ENCODE measurements at regions of chr6 and their contacts with region 1.

Region 1: DNA sequence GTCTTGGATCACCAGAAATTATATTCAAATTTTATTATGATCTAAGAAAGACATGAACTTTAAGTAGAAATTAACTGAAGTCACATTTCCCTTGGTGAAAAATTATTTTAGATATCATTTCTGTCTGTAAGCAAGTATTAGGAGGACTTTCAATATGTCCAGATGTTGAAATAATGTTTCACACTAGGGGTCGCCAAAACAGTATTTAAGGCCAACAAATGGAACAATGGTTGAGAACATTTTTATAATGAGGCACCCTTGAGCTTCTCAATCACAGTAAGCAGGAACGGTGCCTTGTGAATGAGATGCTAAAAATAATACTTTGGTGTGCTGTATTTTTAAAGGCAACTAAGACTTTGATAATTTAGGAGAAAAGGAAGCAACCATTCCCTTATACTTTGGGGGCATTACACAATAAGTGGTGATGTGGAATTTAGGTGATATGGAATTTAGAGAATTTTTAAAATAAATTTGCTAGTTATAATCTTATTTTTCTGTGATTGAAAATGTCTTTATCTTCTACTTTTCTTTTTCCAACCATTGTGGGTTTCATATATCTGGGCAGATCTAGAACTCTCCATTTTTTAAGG is 9.6 kb upstream of the SF3B5 start:
- DNase-seq: no peak
- H3K4me3 ChIP-seq: no peak overlapping the region
- H3K27ac ChIP-seq: no peak overlapping the region
- H3K4me1 ChIP-seq: no peaks in the 10 kb centered on the region
- H3K27me3 ChIP-seq: no peaks in the 10 kb centered on the region
- CTCF ChIP-seq: peak; percentile 76

Region 2: GRCh38 chr6:144158133-144158532 is 53.1 kb after region 1 on chr6:
- intact Hi-C with region 1: loop called (anchors 2 kb)
- DNase-seq: peak; percentile 47
- H3K4me3 ChIP-seq: peak overlapping the region; percentile 20
- H3K27ac ChIP-seq: peak overlapping the region; percentile 74
- H3K4me1 ChIP-seq: peaks cover 52% of the 10 kb centered on the region
- H3K27me3 ChIP-seq: no peaks in the 10 kb centered on the region
- CTCF ChIP-seq: no peak

Region 3: DNA sequence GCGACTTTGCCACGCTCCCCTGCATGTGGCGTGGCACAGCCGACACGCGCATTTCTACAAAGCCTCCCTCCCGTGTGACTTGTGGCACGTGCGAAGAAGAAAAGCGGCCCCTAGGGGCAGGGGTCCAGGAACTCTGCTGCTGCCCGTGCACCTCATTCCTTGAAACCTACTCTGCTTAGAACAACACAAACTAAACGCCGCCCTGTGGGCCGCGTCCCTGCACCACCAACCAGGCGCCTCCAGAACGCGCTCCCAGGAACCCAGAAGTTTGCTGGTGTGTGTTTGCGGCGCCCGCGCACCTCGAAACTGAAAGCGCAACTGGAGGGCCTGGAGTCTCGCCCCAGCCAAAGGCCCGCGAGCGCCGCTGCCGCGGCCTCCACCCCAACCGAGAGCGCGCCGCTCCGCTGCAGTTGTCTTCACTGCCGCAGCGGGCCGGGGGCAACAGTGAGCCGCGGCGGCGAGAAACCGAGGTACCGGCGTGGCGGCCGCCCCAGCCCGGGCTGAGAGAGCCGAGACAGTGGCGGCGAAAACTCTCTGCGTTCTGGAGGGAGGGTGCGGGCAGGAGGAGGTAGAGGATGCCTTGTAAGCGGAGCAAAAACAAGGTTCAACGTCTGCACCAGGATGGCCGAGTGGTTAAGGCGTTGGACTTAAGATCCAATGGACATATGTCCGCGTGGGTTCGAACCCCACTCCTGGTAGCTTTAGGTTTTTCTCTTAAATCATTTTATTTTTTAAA is 111.1 kb after region 1 on chr6:
- intact Hi-C with region 1: loop called (anchors 2 kb)
- DNase-seq: peak; percentile 93
- H3K4me3 ChIP-seq: peak overlapping the region; percentile 79
- H3K27ac ChIP-seq: peak overlapping the region; percentile 93
- H3K4me1 ChIP-seq: peaks cover 31% of the 10 kb centered on the region
- H3K27me3 ChIP-seq: no peaks in the 10 kb centered on the region
- CTCF ChIP-seq: peak; percentile 67

Region 4: DNA sequence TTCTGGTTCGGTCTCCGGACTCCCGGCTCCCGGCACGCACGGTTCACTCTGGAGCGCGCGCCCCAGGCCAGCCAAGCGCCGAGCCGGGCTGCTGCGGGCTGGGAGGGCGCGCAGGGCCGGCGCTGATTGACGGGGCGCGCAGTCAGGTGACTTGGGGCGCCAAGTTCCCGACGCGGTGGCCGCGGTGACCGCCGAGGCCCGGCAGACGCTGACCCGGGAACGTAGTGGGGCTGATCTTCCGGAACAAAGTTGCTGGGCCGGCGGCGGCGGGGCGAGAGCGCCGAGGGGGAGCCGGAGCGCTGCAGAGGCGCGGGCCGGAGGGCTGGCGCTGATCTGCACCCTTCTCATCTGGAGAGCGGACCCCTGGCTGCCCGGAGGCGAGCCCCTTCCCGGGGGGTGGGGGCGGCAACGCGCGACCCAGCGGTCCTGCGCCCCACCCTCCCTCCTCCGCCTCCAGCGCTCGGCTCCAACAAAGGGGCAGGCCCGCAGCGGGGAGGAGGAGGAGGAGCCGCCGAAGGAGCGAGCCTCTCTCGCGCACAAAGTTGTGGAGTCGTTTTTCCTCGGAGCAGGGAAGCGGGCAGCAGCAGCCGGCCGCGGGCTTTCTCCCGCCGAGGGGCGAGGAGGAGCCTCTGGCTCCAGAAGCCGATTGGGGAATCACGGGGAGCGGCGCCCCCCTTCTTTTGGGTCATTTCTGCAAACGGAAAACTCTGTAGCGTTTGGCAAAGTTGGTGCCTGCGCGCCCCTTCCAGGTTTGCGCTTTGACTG is 180.0 kb after region 1 on chr6 and contains the start of gene UTRN:
- intact Hi-C with region 1: loop called (anchors 10 kb)
- DNase-seq: peak; percentile 85
- H3K4me3 ChIP-seq: peak within 1 kb of the TSS; percentile 96
- H3K27ac ChIP-seq: peak within 1 kb of the TSS; percentile 98
- H3K4me1 ChIP-seq: peaks cover 48% of the 10 kb centered on the region
- H3K27me3 ChIP-seq: no peaks in the 10 kb centered on the region
- CTCF ChIP-seq: peak; percentile 12
- total RNA-seq, gene UTRN: 68.3 TPM

Region 5: GRCh38 chr6:144482142-144482541 is 377.1 kb after region 1 on chr6:
- intact Hi-C with region 1: loop called (anchors 5 kb)
- DNase-seq: peak; percentile 76
- H3K4me3 ChIP-seq: no peak overlapping the region
- H3K27ac ChIP-seq: peak overlapping the region; percentile 12
- H3K4me1 ChIP-seq: peaks cover 42% of the 10 kb centered on the region
- H3K27me3 ChIP-seq: no peaks in the 10 kb centered on the region
- CTCF ChIP-seq: peak; percentile 72

Measured in left ventricle myocardium inferior (tissue), 1 donor.